Activated CD8-positive, alpha-beta T cell treated with anti-CD3 and anti-CD28 coated beads for 36 hours (primary cell): ENCODE measurements at regions of chr9 and their contacts with region 1.

Region 1: DNA sequence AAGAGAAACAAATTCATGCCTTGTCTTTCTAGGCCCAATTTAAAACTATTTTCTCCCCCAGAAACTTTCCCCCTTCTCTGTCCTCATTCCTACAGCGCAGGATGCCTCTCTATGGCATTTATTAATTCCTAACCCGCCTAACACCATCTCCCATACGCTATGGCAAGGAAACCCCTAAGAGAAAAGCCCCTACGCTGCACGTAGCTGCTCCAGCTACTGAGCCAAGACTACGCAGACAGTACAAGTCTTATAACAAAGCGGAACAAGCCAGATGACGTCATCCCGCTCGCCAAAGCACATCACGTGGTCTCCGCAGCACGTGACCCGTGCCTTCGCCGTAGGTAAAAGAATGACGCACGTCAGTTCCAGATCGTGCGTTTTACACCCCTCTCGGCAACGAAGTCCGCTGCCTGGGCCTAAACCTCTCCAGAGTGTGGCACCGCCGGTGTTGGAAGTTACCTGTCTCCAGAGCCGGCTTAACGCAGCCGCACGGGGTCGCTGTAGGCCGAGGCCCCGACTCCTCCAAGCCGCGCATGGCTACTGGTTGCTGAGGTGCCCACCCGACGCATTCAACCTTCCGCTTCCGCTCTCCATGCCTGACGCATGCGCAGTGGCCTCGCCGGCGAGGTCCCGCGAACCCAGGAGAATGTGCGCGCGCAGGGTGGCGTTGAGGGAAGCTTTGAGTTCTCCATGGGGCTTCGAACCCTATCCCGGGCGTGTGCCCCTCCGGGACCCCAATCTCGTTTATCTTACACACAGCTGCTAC is at the start of gene TRMO:
- DNase-seq: peak; percentile 99
- ATAC-seq: peak; percentile 79
- H3K4me3 Mint-ChIP-seq: peak within 1 kb of the TSS; percentile 82
- H3K27ac Mint-ChIP-seq: peak within 1 kb of the TSS; percentile 95
- H3K4me1 Mint-ChIP-seq: peaks cover 39% of the 10 kb centered on the region
- H3K27me3 Mint-ChIP-seq: peaks cover 2% of the 10 kb centered on the region
- CTCF ChIP-seq: peak; percentile 63
- total RNA-seq, gene TRMO: 12.6 to 13.3 TPM

Region 2: GRCh38 chr9:97811527-97812246 is 110.5 kb before region 1 on chr9:
- CTCF ChIA-PET with region 1: no interaction called
- POLR2A ChIA-PET with region 1: no interaction called
- intact Hi-C with region 1: no loop called
- DNase-seq: no peak
- ATAC-seq: no peak
- H3K4me3 Mint-ChIP-seq: no peak overlapping the region
- H3K27ac Mint-ChIP-seq: no peak overlapping the region
- H3K4me1 Mint-ChIP-seq: peaks cover 4% of the 10 kb centered on the region
- H3K27me3 Mint-ChIP-seq: peaks cover 12% of the 10 kb centered on the region
- CTCF ChIP-seq: no peak

Region 3: GRCh38 chr9:97830884-97831829 is 91.0 kb before region 1 on chr9:
- CTCF ChIA-PET with region 1: no interaction called
- POLR2A ChIA-PET with region 1: no interaction called
- intact Hi-C with region 1: no loop called
- DNase-seq: no peak
- ATAC-seq: no peak
- H3K4me3 Mint-ChIP-seq: no peak overlapping the region
- H3K27ac Mint-ChIP-seq: no peak overlapping the region
- H3K4me1 Mint-ChIP-seq: no peaks in the 10 kb centered on the region
- H3K27me3 Mint-ChIP-seq: peaks cover 6% of the 10 kb centered on the region
- CTCF ChIP-seq: no peak

Region 4: DNA sequence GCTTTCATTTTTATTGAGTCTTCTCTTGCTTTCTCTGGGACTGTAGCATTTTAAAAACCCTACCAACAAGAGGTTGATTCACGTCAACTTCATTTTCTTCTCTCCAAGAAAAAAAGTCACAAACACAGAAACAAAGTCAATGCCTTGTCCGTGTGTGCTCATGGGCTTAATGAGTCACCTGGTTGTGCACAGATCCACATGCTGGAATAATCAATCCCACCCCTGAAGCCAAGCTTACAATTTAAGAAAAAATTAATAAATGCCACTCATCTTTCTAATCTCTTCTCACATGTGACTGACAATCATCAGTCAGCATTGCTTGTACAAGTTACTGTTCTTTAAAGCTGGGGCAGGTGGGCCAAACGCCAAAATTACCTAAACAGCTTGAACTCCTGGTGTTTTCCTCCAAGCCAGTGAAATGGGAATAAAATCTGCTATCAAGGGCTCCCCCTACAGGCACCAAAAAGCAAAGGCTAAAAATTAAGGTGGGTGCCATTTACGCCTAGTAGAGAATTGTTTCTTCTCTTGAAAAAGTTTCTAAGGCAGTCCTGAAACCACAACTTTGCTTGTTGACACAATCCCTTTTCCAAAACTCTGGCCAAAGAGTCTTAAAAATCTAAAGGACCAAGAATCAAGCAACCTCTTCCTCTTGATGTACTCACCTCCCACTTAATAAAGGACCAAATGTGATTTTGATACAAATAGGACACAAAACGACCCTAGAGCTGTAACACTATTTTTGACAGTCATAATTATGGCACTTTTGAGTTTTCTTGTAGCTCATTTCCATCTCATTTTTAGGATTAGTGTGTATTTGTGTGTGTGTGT is 21.2 kb before region 1 on chr9:
- CTCF ChIA-PET with region 1: interaction called, 100 read pairs
- POLR2A ChIA-PET with region 1: interaction called, 86 read pairs
- intact Hi-C with region 1: no loop called
- DNase-seq: peak; percentile 32
- ATAC-seq: no peak
- H3K4me3 Mint-ChIP-seq: no peak overlapping the region
- H3K27ac Mint-ChIP-seq: peak overlapping the region; percentile 66
- H3K4me1 Mint-ChIP-seq: peaks cover 46% of the 10 kb centered on the region
- H3K27me3 Mint-ChIP-seq: no peaks in the 10 kb centered on the region
- CTCF ChIP-seq: peak; percentile 88

Region 5: GRCh38 chr9:97943308-97943855 is 21.2 kb after region 1 on chr9:
- CTCF ChIA-PET with region 1: interaction called, 20 read pairs
- POLR2A ChIA-PET with region 1: interaction called, 3 read pairs
- intact Hi-C with region 1: no loop called
- DNase-seq: no peak
- ATAC-seq: no peak
- H3K4me3 Mint-ChIP-seq: no peak overlapping the region
- H3K27ac Mint-ChIP-seq: no peak overlapping the region
- H3K4me1 Mint-ChIP-seq: peaks cover 5% of the 10 kb centered on the region
- H3K27me3 Mint-ChIP-seq: no peaks in the 10 kb centered on the region
- CTCF ChIP-seq: no peak

Region 6: GRCh38 chr9:97966493-97966892 is 44.4 kb after region 1 on chr9:
- CTCF ChIA-PET with region 1: interaction called, 20 read pairs
- POLR2A ChIA-PET with region 1: no interaction called
- intact Hi-C with region 1: no loop called
- DNase-seq: no peak
- ATAC-seq: no peak
- H3K4me3 Mint-ChIP-seq: no peak overlapping the region
- H3K27ac Mint-ChIP-seq: no peak overlapping the region
- H3K4me1 Mint-ChIP-seq: peaks cover 16% of the 10 kb centered on the region
- H3K27me3 Mint-ChIP-seq: peaks cover 2% of the 10 kb centered on the region
- CTCF ChIP-seq: no peak

Region 7: GRCh38 chr9:98002808-98003207 is 80.7 kb after region 1 on chr9:
- CTCF ChIA-PET with region 1: interaction called, 20 read pairs
- POLR2A ChIA-PET with region 1: interaction called, 3 read pairs
- intact Hi-C with region 1: no loop called
- DNase-seq: no peak
- ATAC-seq: no peak
- H3K4me3 Mint-ChIP-seq: no peak overlapping the region
- H3K27ac Mint-ChIP-seq: no peak overlapping the region
- H3K4me1 Mint-ChIP-seq: peaks cover 53% of the 10 kb centered on the region
- H3K27me3 Mint-ChIP-seq: no peaks in the 10 kb centered on the region
- CTCF ChIP-seq: no peak

Region 8: DNA sequence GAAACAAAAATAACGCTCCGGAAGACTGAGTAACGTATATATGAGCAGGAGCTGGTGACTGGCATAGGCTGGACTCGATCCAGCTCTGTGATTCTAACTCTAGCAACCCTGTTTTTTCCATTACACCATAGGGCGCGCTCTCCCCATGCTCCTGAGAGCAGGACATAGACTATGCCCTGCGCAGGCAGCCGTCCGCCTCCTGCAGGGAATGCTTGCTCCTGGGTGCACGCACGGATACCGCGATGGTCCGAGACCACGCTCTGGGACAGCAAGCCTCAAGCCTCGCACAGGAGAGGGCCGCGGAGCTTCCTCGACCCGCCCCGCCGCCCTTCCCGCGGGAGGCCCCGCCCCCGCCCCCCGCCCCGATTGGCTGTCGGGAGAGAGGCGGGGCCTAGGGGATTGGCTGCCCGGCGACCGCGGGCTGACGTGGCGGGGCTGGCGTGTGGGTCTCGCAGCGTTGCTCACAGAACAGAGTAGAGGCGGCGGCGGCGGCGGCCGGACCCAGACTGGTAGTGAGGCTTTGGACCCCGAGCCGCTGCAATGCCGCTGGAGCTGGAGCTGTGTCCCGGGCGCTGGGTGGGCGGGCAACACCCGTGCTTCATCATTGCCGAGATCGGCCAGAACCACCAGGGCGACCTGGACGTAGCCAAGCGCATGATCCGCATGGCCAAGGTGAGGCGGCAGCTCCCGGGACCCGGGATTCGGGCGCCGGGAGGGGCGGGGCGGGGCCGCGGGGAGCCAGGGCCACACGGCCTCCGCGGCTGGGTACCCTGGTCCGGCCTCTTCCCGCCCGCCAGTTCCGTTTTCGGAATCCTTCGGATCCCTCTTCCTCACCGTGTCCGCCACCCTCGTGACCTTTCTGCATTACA is 134.4 kb after region 1 on chr9 and contains the start of gene NANS:
- CTCF ChIA-PET with region 1: interaction called, 5 read pairs
- POLR2A ChIA-PET with region 1: interaction called, 20 read pairs
- intact Hi-C with region 1: no loop called
- DNase-seq: peak; percentile 96
- ATAC-seq: peak; percentile 95
- H3K4me3 Mint-ChIP-seq: peak within 1 kb of the TSS; percentile 91
- H3K27ac Mint-ChIP-seq: peak within 1 kb of the TSS; percentile 94
- H3K4me1 Mint-ChIP-seq: peaks cover 32% of the 10 kb centered on the region
- H3K27me3 Mint-ChIP-seq: no peaks in the 10 kb centered on the region
- CTCF ChIP-seq: no peak
- total RNA-seq, gene NANS: 51.2 to 51.8 TPM